ENCODE measurements at regions of chr1 and their contacts with region 1.

Region 1: GRCh38 chr1:40032240-40032891 is 8.2 kb upstream of the CAP1 start:
- DNase-seq: peak; percentile 65 to 78 (median 78)
- H3K4me3 ChIP-seq: no peak overlapping the region
- H3K27ac ChIP-seq: no peak overlapping the region
- H3K4me1 ChIP-seq: peaks cover 31 to 62% (median 54%) of the 10 kb centered on the region in 4 experiments
- H3K27me3 ChIP-seq: no peaks in the 10 kb centered on the region

Region 2: GRCh38 chr1:39816415-39817090 is 215.8 kb before region 1 on chr1:
- CTCF ChIA-PET with region 1: interaction called, 14 read pairs
- POLR2A ChIA-PET with region 1: no interaction called
- DNase-seq: peak; percentile 65 to 83 (median 77)
- H3K4me3 ChIP-seq: peak overlapping the region in 1 of 7 experiments; percentile 16
- H3K27ac ChIP-seq: no peak overlapping the region
- H3K4me1 ChIP-seq: peaks cover 0 to 8% (median 4%) of the 10 kb centered on the region in 4 experiments
- H3K27me3 ChIP-seq: peaks cover 0 to 2% (median 0%) of the 10 kb centered on the region in 5 experiments

Region 3: GRCh38 chr1:39940252-39940651 is 92.1 kb before region 1 on chr1:
- CTCF ChIA-PET with region 1: no interaction called
- POLR2A ChIA-PET with region 1: no interaction called
- DNase-seq: peak in 2 of 3 donors; percentile 59 to 61
- H3K4me3 ChIP-seq: no peak overlapping the region
- H3K27ac ChIP-seq: no peak overlapping the region
- H3K4me1 ChIP-seq: peaks cover 2 to 43% (median 17%) of the 10 kb centered on the region in 4 experiments
- H3K27me3 ChIP-seq: no peaks in the 10 kb centered on the region

Region 4: DNA sequence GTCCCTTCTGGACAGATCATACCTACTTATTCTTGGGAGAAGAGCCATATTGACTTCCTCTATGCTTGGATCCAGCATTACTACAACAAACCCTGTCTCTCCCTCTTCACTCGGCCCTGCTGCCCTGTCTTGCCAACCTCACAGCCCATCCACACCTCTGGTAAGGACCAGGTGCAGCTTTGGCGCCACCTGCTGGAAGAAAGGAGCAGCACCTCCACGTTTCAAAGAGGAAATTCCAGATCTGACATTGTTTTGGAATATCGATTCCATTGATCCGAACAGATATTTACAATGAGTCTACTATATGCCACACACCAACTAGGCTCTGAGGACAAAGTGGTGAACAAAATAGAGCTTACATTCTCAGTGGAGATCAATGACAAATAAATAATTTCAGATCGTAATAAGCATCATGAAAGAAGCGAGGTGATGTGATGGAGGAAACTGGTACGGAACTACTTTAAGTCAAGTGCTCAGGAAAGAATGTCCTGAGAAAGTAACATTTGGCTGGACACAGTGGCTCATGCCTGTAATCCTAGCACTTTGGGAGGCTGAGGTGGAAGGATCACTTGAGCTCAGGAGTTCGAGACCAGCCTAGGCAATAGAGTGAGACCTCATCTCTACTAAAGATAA is 58.7 kb before region 1 on chr1:
- CTCF ChIA-PET with region 1: interaction called, 26 read pairs
- POLR2A ChIA-PET with region 1: no interaction called
- DNase-seq: peak; percentile 56 to 77 (median 69)
- H3K4me3 ChIP-seq: peak overlapping the region in 1 of 7 experiments; percentile 12
- H3K27ac ChIP-seq: no peak overlapping the region
- H3K4me1 ChIP-seq: peaks cover 0 to 2% (median 0%) of the 10 kb centered on the region in 4 experiments
- H3K27me3 ChIP-seq: no peaks in the 10 kb centered on the region

Region 5: GRCh38 chr1:39995973-39996393 is 36.4 kb before region 1 on chr1:
- CTCF ChIA-PET with region 1: no interaction called
- POLR2A ChIA-PET with region 1: no interaction called
- DNase-seq: peak in 2 of 3 donors; percentile 41 to 55
- H3K4me3 ChIP-seq: peak overlapping the region in 1 of 7 experiments; percentile 19
- H3K27ac ChIP-seq: no peak overlapping the region
- H3K4me1 ChIP-seq: peaks cover 3 to 15% (median 8%) of the 10 kb centered on the region in 4 experiments
- H3K27me3 ChIP-seq: no peaks in the 10 kb centered on the region

Region 6: DNA sequence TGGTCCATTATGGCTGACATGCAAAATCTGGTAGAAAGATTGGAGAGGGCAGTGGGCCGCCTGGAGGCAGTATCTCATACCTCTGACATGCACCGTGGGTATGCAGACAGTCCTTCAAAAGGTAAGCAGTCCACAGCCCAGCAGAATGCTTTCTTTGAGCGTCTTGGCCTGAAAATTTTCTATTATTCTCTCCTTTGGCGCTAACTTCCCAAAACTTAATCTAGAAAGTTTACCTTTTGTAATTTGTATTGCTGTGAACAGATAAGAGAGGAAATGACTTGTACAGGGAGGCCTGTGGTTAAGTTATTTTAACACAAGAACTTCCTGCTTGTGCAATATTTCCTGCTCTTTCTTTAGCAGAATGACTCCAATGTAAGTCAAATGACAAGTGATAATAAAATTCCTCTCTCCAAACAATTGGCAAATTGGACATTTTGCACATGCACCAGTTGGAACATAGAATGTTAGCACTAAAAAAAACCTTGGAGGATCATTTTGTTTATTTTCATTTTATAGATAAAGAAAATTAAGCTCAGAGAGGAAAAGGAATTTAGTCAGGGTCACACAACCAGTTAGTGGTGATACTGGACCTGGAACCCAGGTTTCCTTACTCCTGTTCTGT is 27.1 kb after region 1 on chr1:
- CTCF ChIA-PET with region 1: interaction called, 42 read pairs
- POLR2A ChIA-PET with region 1: interaction called, 3 read pairs
- DNase-seq: peak; percentile 80 to 90 (median 84)
- H3K4me3 ChIP-seq: peak overlapping the region in 4 of 7 experiments; percentile 36 to 64 (median 54)
- H3K27ac ChIP-seq: peak overlapping the region; percentile 5 to 81
- H3K4me1 ChIP-seq: peaks cover 59 to 95% (median 79%) of the 10 kb centered on the region in 4 experiments
- H3K27me3 ChIP-seq: no peaks in the 10 kb centered on the region

Region 7: GRCh38 chr1:40078512-40079333 is 46.4 kb after region 1 on chr1:
- CTCF ChIA-PET with region 1: interaction called, 13 read pairs
- POLR2A ChIA-PET with region 1: no interaction called
- DNase-seq: peak; percentile 51 to 68 (median 61)
- H3K4me3 ChIP-seq: no peak overlapping the region
- H3K27ac ChIP-seq: no peak overlapping the region
- H3K4me1 ChIP-seq: peaks cover 0 to 15% (median 7%) of the 10 kb centered on the region in 4 experiments
- H3K27me3 ChIP-seq: no peaks in the 10 kb centered on the region

Measured in common myeloid progenitor, CD34-positive (primary cell).